Ascending aorta (tissue), 2 donors: ENCODE measurements at regions of chr12 and their contacts with region 1.

Region 1: DNA sequence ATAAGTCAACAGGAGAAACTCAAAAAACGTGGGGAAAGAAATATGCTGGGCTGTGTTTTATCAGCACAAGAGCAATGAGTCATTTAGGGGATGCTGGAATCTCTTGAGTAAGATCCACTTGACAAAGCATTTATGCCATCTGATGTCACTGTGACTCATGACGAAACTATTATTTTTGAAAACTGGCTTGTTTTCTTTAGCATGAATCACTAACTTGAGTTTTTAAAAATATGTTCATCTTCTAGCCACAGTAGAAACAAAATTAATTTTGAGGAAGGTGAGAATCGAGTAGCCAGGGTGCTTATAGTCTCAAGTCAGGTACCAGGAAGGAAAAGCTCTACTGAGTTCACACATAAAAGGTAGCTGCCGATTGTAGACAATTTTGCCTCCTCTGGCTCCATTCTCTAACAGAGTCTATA is 456.2 kb upstream of the MGAT4C start:
- DNase-seq: no peak
- H3K4me3 ChIP-seq: no peak overlapping the region
- H3K27ac ChIP-seq: no peak overlapping the region
- H3K4me1 ChIP-seq: no peaks in the 10 kb centered on the region
- H3K27me3 ChIP-seq: no peaks in the 10 kb centered on the region
- CTCF ChIP-seq: no peak

Region 2: DNA sequence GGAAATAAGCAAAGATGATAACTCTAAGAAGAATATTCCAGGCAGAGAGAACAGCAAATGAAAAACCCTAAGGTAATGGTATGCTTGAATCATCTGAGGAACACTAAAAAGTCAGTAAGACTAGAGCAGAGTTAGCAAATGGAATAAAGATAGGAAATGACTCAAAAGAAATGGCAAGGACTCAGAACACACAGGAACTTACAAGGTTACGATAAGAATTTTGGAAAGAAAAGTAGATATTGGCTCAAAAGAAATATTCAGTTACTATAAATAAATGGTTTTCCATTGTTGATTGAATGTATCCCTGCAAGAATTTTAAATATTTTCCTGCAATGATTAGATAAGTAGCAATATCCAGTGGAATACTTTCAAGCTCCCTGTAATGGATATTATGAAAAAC is 610.9 kb after region 1 on chr12:
- intact Hi-C with region 1: loop called (anchors 10 kb)
- DNase-seq: no peak
- H3K4me3 ChIP-seq: no peak overlapping the region
- H3K27ac ChIP-seq: peak overlapping the region; percentile 54 to 65
- H3K4me1 ChIP-seq: peaks cover 0 to 7% of the 10 kb centered on the region in 2 donors
- H3K27me3 ChIP-seq: no peaks in the 10 kb centered on the region
- CTCF ChIP-seq: no peak